ENCODE measurements at regions of chr6 and their contacts with region 1.

Region 1: DNA sequence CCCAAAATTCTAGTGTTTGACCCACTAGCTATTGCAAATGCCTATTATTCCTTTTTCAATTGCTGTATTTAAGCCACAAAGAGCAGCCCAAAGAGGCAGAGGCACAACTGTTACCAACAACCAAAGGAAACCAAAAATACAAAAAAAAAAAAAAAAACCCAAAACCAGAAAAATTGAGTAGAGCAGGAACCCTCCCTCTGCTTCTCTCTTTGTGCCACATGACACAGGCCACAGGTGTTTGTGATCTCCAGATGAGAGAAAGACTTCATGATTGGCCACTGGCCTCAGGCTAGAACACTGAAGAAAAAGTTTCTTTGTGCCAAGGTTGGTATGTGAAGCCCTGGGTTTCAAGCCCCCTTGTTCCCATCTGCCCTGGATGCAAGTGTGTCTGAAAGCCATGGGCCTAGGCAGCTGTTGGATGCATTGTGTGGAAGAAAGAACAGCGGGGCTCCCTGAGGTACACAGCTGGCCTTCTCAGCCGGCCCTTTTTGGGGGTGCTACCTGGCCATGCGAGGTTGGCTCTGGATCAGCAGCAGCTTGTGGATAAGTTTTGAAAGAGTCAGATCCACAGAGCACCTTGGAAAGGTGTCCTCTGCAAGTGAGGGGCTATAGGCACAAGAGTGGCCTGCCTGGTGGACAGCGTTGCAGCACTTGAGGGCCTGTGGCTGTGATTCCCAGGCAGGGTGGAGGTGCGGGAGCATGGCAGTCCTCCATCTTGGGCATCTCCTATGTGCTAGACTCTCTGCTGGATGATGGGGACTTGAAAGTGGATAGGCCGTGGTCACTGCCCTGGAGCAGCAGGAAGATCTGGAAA is 204.5 kb downstream of the ZDHHC14 start:
- DNase-seq: no peak
- H3K4me3 ChIP-seq: no peak overlapping the region
- H3K4me3 Mint-ChIP-seq: peak overlapping the region; percentile 50
- H3K27ac Mint-ChIP-seq: peak overlapping the region; percentile 92
- H3K4me1 ChIP-seq: peaks cover 27% of the 10 kb centered on the region
- H3K4me1 Mint-ChIP-seq: peaks cover 32% of the 10 kb centered on the region
- H3K27me3 ChIP-seq: no peaks in the 10 kb centered on the region
- H3K27me3 Mint-ChIP-seq: no peaks in the 10 kb centered on the region
- CTCF ChIP-seq: no peak

Region 2: GRCh38 chr6:157424491-157425020 is 160.9 kb before region 1 on chr6:
- CTCF ChIA-PET with region 1: no interaction called
- POLR2A ChIA-PET with region 1: no interaction called
- intact Hi-C with region 1: loop called (anchors 1 kb)
- DNase-seq: peak; percentile 77 to 82
- H3K4me3 ChIP-seq: 0 out of 2 replicates have a peak overlapping the region, but pooled peaks have one; percentile 5
- H3K4me3 Mint-ChIP-seq: peak overlapping the region; percentile 63
- H3K27ac Mint-ChIP-seq: peak overlapping the region; percentile 92
- H3K4me1 ChIP-seq: peaks cover 29% of the 10 kb centered on the region
- H3K4me1 Mint-ChIP-seq: peaks cover 56% of the 10 kb centered on the region
- H3K27me3 ChIP-seq: no peaks in the 10 kb centered on the region
- H3K27me3 Mint-ChIP-seq: no peaks in the 10 kb centered on the region
- CTCF ChIP-seq: peak in 1 of 2 experiments; percentile 17

Region 3: GRCh38 chr6:157539900-157540752 is 45.4 kb before region 1 on chr6:
- CTCF ChIA-PET with region 1: no interaction called
- POLR2A ChIA-PET with region 1: no interaction called
- intact Hi-C with region 1: loop called (anchors 1 kb)
- DNase-seq: peak; percentile 77 to 78
- H3K4me3 ChIP-seq: no peak overlapping the region
- H3K4me3 Mint-ChIP-seq: peak overlapping the region; percentile 51
- H3K27ac Mint-ChIP-seq: peak overlapping the region; percentile 85
- H3K4me1 ChIP-seq: peaks cover 37% of the 10 kb centered on the region
- H3K4me1 Mint-ChIP-seq: peaks cover 42% of the 10 kb centered on the region
- H3K27me3 ChIP-seq: no peaks in the 10 kb centered on the region
- H3K27me3 Mint-ChIP-seq: no peaks in the 10 kb centered on the region
- CTCF ChIP-seq: no peak

Region 4: DNA sequence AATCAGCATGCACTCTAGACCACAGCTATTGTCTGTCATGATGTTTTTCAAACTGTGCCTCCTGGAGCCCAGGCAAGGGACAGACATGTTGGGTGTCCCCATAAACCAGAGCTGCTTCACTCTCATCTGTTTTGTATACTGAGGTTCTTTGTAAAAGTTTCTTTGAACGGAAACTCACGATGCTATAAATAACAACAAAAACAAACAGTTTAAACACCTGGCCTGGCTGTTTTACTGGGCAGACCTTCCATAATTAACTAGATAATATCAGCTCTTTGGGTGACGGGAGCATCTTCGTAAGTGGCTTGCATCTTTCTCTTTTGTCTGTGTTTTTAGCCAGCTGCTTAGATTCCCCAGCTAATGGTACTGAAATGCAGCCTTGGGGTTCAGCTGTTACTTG is 14.2 kb before region 1 on chr6:
- CTCF ChIA-PET with region 1: no interaction called
- POLR2A ChIA-PET with region 1: no interaction called
- intact Hi-C with region 1: loop called (anchors 1 kb)
- DNase-seq: no peak
- H3K4me3 ChIP-seq: no peak overlapping the region
- H3K4me3 Mint-ChIP-seq: no peak overlapping the region
- H3K27ac Mint-ChIP-seq: peak overlapping the region; percentile 32
- H3K4me1 ChIP-seq: 0 out of 2 replicates have a peak, but pooled peaks cover 6% of the 10 kb centered on the region
- H3K4me1 Mint-ChIP-seq: peaks cover 5% of the 10 kb centered on the region
- H3K27me3 ChIP-seq: no peaks in the 10 kb centered on the region
- H3K27me3 Mint-ChIP-seq: no peaks in the 10 kb centered on the region
- CTCF ChIP-seq: no peak

Region 5: GRCh38 chr6:157715765-157716164 is 130.3 kb after region 1 on chr6:
- CTCF ChIA-PET with region 1: no interaction called
- POLR2A ChIA-PET with region 1: no interaction called
- intact Hi-C with region 1: no loop called
- DNase-seq: no peak
- H3K4me3 ChIP-seq: no peak overlapping the region
- H3K4me3 Mint-ChIP-seq: no peak overlapping the region
- H3K27ac Mint-ChIP-seq: no peak overlapping the region
- H3K4me1 ChIP-seq: no peaks in the 10 kb centered on the region
- H3K4me1 Mint-ChIP-seq: peaks cover 12% of the 10 kb centered on the region
- H3K27me3 ChIP-seq: no peaks in the 10 kb centered on the region
- H3K27me3 Mint-ChIP-seq: no peaks in the 10 kb centered on the region
- CTCF ChIP-seq: no peak